WTC11 (cell line): ENCODE measurements at regions of chr17 and their contacts with region 1.

Region 1: GRCh38 chr17:33712120-33712519 is 419.0 kb upstream of the ASIC2 start:
- DNase-seq: peak; percentile 23
- ATAC-seq: peak; percentile 74
- H3K4me3 Mint-ChIP-seq: no peak overlapping the region
- H3K27ac Mint-ChIP-seq: no peak overlapping the region
- H3K4me1 Mint-ChIP-seq: no peaks in the 10 kb centered on the region
- H3K27me3 Mint-ChIP-seq: peaks cover 57% of the 10 kb centered on the region
- CTCF ChIP-seq: no peak

Region 2: DNA sequence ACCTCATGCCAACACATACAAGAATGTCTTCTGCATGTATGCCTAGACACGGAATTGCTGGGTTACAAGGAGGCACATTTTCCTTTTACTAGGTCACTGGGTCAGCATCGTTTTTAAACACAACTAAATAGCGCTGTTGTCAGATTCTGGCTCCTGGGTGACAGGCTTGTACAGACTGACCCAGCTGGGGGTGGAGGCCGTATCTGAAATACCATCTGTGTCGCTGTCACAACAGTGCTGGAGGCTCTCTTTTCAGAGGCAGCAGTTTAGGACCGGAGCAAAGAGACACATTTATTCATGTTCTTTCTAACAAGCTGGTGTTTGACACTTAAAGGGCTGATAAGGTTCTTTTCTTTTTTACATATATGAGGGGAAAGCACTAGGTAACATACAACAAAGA is 16.0 kb before region 1 on chr17:
- CTCF ChIA-PET with region 1: interaction called, 12 read pairs
- POLR2A ChIA-PET with region 1: no interaction called
- DNase-seq: no peak
- ATAC-seq: no peak
- H3K4me3 Mint-ChIP-seq: no peak overlapping the region
- H3K27ac Mint-ChIP-seq: no peak overlapping the region
- H3K4me1 Mint-ChIP-seq: no peaks in the 10 kb centered on the region
- H3K27me3 Mint-ChIP-seq: peaks cover 20% of the 10 kb centered on the region
- CTCF ChIP-seq: no peak

Region 3: GRCh38 chr17:33802349-33803198 is 90.5 kb after region 1 on chr17:
- CTCF ChIA-PET with region 1: no interaction called
- POLR2A ChIA-PET with region 1: no interaction called
- DNase-seq: no peak
- ATAC-seq: no peak
- H3K4me3 Mint-ChIP-seq: no peak overlapping the region
- H3K27ac Mint-ChIP-seq: no peak overlapping the region
- H3K4me1 Mint-ChIP-seq: peaks cover 36% of the 10 kb centered on the region
- H3K27me3 Mint-ChIP-seq: peaks cover 6% of the 10 kb centered on the region
- CTCF ChIP-seq: no peak

Region 4: DNA sequence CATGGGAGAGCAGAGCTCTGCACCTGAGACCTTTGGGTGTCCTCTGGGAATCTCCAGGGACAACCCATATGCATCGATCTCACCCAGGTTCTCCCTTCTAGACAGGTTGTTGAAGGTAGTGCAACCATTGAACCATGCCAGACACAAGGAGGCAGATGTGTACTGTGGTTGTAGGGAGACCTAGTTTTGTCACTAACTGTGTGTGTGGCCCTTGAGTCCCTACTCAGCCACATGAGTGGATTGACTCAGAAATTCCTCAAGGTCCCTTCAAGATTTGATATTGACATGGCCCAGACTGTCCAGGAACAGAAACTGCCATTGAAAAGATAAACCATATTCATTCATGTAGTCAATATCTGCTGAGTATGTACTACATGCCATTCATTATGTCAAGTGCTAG is 146.6 kb after region 1 on chr17:
- CTCF ChIA-PET with region 1: no interaction called
- POLR2A ChIA-PET with region 1: no interaction called
- DNase-seq: no peak
- ATAC-seq: no peak
- H3K4me3 Mint-ChIP-seq: no peak overlapping the region
- H3K27ac Mint-ChIP-seq: no peak overlapping the region
- H3K4me1 Mint-ChIP-seq: peaks cover 14% of the 10 kb centered on the region
- H3K27me3 Mint-ChIP-seq: peaks cover 10% of the 10 kb centered on the region
- CTCF ChIP-seq: no peak